Left ventricle myocardium inferior (tissue), 1 donor: ENCODE measurements at regions of chr4 and their contacts with region 1.

Region 1: DNA sequence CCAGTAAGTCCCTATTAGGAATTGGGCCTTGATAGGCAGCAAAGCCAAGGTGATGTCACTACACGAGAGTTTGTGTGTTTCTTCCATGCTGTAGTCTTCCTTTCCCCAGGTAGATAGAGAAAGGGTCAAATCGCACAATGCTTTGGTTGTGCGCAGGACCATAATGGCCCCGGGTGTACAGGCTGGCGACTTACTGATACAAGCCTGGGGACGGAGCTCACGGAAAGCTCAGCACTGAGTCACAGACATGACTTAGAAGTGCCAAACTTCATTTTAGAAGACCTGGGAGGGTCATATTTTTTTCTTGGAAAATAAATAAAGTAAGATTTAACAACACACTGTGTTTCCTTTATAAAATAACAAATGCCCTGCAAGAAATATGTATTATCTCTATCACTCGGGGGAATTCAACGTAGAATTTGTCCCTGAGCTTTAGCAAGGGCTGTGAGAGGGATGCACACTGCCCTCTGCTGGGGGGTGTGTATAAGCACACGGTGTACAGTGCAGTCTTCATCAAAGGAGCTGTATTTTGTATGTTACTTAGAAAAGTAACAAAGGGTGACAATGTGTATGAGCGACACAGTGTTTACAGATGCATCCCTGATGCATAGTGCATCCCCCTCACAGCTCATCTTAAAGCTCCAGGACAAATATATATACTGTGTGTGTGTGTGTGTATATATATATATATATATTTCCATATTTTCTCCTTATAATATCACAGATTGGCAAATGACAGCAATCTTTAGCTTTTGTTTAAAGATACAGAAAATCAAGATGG is 254.5 kb upstream of the VEGFC start:
- DNase-seq: peak; percentile 17
- H3K4me3 ChIP-seq: no peak overlapping the region
- H3K27ac ChIP-seq: no peak overlapping the region
- H3K4me1 ChIP-seq: peaks cover 3% of the 10 kb centered on the region
- H3K27me3 ChIP-seq: no peaks in the 10 kb centered on the region
- CTCF ChIP-seq: peak; percentile 91

Region 2: GRCh38 chr4:176377780-176378179 is 669.5 kb before region 1 on chr4:
- intact Hi-C with region 1: loop called (anchors 2 kb)
- DNase-seq: no peak
- H3K4me3 ChIP-seq: no peak overlapping the region
- H3K27ac ChIP-seq: no peak overlapping the region
- H3K4me1 ChIP-seq: no peaks in the 10 kb centered on the region
- H3K27me3 ChIP-seq: no peaks in the 10 kb centered on the region
- CTCF ChIP-seq: peak; percentile 65

Region 3: GRCh38 chr4:176563591-176563990 is 483.7 kb before region 1 on chr4:
- intact Hi-C with region 1: loop called (anchors 10 kb)
- DNase-seq: no peak
- H3K4me3 ChIP-seq: no peak overlapping the region
- H3K27ac ChIP-seq: no peak overlapping the region
- H3K4me1 ChIP-seq: no peaks in the 10 kb centered on the region
- H3K27me3 ChIP-seq: no peaks in the 10 kb centered on the region
- CTCF ChIP-seq: peak; percentile 51